Heart left ventricle (tissue), 16 donors: ENCODE measurements at regions of chr18 and their contacts with region 1.

Region 1: DNA sequence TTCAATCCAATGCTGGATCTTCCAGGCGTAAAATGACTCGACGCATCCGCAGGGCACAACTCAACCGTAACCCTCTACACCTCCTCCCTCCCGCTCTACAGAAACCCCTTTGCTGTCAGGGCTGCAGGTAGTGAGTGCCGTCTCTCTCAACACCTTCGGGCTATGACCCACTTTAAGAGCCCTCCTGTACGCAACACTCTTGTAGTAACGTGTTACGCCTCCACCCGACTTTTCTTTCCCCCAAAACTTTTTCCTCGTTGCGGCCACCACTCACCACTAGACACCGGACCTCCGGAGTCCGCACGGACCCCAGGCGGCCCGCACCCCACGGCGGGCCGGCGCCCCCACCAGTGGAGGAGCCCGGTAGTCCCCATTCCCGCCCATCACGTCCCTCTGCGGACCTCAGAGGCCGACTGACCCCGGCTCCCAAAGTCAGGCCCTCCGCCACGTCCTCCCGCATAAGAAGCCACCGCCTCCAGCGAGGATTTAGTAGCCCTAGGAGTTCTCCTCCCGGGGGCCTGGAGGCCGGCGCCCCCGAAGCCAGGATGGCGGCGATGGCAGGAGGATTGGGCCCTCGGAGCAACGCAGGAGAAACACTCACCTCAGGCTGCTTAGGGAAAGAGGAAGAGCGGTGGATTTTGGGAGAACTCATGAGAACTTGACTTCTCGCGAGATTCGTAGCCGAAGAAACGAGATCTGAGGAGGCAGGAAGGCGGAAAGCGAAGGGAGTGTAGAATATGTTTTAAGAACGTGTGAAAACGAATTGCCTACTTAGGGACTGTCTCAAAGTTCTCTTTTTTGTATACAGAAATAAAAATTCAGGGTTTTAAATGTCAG is 5.0 kb upstream of the C18orf32 start:
- DNase-seq: peak; percentile 82 to 92 (median 92)
- ATAC-seq: peak; percentile 89 to 95 (median 90)
- H3K4me3 ChIP-seq: peak within 1 kb of the TSS; percentile 48 to 92 (median 78)
- H3K27ac ChIP-seq: peak within 1 kb of the TSS; percentile 56 to 95 (median 86)
- H3K4me1 ChIP-seq: peaks cover 3 to 46% (median 19%) of the 10 kb centered on the region in 12 donors
- H3K27me3 ChIP-seq: no peaks in the 10 kb centered on the region
- CTCF ChIP-seq: no peak
- POLR2A ChIP-seq: peak; percentile 82 to 94

Region 2: DNA sequence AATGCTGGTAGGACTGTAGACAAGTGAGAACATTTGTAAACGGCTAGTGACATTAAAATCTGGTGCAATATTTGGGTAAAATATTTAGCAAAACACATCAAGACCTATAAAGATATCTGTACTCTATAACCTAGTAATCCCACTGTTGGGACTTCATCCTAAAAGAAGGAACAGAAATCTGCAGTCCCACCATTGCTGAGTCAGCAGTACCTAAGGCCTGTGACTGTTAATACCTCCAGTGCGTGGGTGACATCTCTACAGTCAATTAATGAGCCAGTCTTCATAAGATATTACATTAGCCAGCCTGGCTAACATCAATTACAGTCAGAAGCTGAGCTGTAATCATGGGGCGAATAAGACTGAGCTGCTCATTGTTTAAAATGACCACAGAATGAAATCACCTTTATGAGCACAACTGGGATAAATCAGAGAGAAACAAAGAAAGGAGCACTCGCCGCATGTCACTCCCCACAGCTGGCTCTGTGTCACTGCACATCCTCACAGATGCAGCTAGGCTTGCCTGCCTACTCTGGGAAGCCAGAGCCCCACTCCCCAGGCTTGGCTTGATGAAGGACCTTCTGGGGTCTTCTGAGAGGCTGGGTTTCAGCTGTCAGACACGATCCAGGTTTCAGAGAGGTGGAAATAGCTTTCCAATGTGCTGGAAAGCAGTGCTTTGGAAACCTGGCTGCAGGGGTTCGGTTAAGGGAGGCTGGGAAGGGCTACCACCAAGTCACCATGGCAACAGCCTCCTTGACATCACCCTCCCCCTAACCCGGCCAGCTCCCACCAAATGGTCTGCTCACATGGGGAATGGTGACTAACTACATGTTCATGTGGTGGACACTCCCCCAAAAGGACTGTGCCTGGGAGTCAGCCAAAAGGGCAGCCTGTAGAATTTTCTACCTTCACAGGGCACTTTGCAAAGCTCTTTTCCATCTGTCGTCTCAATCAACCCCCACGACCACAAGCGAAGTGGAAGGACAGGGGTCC is 1227.9 kb before region 1 on chr18:
- intact Hi-C with region 1: no loop called
- DNase-seq: peak in 1 of 5 donors; percentile 26
- ATAC-seq: no peak
- H3K4me3 ChIP-seq: no peak overlapping the region
- H3K27ac ChIP-seq: no peak overlapping the region
- H3K4me1 ChIP-seq: peaks cover 0 to 6% (median 0%) of the 10 kb centered on the region in 12 donors
- H3K27me3 ChIP-seq: no peaks in the 10 kb centered on the region
- CTCF ChIP-seq: no peak
- POLR2A ChIP-seq: no peak

Region 3: GRCh38 chr18:48806551-48807261 is 685.4 kb before region 1 on chr18:
- intact Hi-C with region 1: loop called in 1 of 10 experiments (anchors 5 kb)
- DNase-seq: peak in 3 of 5 donors; percentile 45 to 64 (median 45)
- ATAC-seq: peak; percentile 61 to 71 (median 66)
- H3K4me3 ChIP-seq: no peak overlapping the region
- H3K27ac ChIP-seq: peak overlapping the region in 11 of 12 donors; percentile 40 to 83 (median 58)
- H3K4me1 ChIP-seq: peaks cover 5 to 70% (median 43%) of the 10 kb centered on the region in 12 donors
- H3K27me3 ChIP-seq: no peaks in the 10 kb centered on the region
- CTCF ChIP-seq: no peak
- POLR2A ChIP-seq: no peak

Region 4: GRCh38 chr18:49274188-49274714 is 217.8 kb before region 1 on chr18:
- intact Hi-C with region 1: no loop called
- DNase-seq: no peak
- ATAC-seq: no peak
- H3K4me3 ChIP-seq: no peak overlapping the region
- H3K27ac ChIP-seq: no peak overlapping the region
- H3K4me1 ChIP-seq: peaks cover 0 to 5% (median 0%) of the 10 kb centered on the region in 12 donors
- H3K27me3 ChIP-seq: no peaks in the 10 kb centered on the region
- CTCF ChIP-seq: no peak
- POLR2A ChIP-seq: no peak

Region 5: DNA sequence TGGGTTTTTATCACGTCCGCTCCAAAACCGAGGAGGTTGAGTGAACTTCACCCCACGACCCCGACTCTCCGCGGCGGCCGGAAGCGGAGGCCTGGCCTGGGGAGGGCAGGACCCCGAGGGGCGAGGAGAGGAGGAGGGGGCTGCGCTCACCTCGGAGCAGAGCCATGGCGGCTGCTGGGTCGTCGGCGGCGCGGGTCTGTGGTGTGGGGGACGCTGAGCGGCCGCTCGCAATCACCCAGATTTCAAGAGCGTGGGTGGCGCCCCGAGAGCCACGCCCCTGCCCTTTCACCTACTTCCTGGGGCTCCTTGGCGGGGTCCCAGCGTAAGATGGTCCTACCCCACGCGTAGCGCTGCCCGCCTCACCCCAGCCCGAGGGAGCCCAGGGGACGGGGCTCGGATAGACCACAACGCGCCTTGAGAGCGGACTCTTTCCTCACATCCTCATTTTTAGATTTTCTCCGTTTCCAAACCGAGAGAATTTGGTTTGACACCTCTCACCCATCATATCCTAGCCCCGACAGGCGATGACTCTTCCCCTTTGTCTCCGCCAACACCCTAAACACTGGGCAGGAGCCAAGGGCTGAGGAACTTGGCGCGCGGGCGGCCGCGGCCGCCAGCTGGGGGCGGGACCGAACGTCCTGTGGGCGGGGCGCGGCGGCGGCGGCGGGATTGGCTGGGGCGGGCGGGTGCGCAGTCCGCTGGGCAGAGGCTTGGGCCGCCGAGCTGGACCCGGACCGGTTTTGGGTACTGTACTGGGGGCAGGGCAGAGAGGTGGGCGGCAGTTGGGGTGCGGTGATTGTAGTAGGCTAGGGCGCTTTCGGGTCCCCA is 321.5 kb after region 1 on chr18 and contains the start of gene ACAA2:
- intact Hi-C with region 1: loop called in 1 of 10 experiments (anchors 10 kb)
- DNase-seq: peak; percentile 91 to 95 (median 91)
- ATAC-seq: peak; percentile 92 to 97 (median 95)
- H3K4me3 ChIP-seq: peak within 1 kb of the TSS; percentile 71 to 96 (median 86)
- H3K27ac ChIP-seq: peak within 1 kb of the TSS; percentile 82 to 100 (median 97)
- H3K4me1 ChIP-seq: peaks cover 0 to 28% (median 15%) of the 10 kb centered on the region in 12 donors
- H3K27me3 ChIP-seq: no peaks in the 10 kb centered on the region
- CTCF ChIP-seq: no peak
- POLR2A ChIP-seq: peak; percentile 25 to 73
- total RNA-seq, gene ACAA2: 165 to 379 (median 261) TPM

Region 6: DNA sequence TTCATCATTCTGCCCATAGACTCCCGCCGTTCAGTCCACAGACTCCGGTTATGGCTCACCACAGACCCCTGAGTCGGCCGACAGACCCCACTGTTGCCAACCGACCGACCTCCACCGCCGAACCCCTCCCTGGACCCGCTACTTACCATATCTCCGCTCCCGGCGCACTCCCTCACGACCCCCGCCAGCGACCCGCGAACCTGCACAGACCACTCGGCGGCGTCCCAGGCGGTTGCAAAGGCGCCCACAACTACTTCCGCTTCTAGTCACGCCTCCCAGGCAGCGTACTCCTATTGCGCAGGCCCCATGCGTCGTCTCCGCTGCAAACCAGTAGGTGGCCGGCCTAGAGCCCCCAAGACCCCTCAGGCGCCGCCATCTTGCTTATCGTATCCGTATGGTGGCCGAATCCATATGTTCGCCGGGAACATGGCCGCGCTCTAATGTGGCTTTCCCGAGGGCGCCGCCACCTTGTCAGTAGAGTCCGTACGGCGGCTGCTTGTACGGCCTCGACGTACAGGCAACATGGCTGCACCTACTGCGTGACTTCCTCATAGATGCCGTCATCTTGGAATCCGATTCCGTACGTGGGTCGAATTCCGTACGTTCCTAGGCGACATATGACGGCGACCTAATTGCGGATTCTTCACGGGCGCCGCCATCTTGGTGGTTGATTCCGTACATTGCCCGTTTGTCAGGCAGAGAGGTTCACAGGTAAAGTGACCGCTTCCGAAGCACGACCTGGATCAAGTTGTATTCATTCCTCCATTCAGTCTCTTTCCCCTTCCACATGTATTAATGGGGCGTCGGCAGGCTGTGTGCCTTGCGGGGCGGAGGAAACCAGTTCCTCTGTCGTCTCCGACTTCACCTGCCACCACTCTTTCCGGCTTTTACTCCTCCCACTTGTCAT is 795.6 kb after region 1 on chr18 and contains the start of gene CXXC1:
- intact Hi-C with region 1: loop called in 2 of 10 experiments (anchors 10 kb)
- DNase-seq: peak; percentile 97 to 99 (median 98)
- ATAC-seq: peak; percentile 95 to 97 (median 96)
- H3K4me3 ChIP-seq: peak within 1 kb of the TSS; percentile 55 to 90 (median 77)
- H3K27ac ChIP-seq: peak within 1 kb of the TSS; percentile 45 to 94 (median 86)
- H3K4me1 ChIP-seq: peaks cover 0 to 20% (median 0%) of the 10 kb centered on the region in 12 donors
- H3K27me3 ChIP-seq: no peaks in the 10 kb centered on the region
- CTCF ChIP-seq: peak; percentile 36 to 63 (median 48)
- POLR2A ChIP-seq: peak in 1 of 2 donors; percentile 44
- total RNA-seq, gene CXXC1: 18.3 to 36.7 (median 33.2) TPM